Left colon (tissue), 2 donors: ENCODE measurements at regions of chr10 and their contacts with region 1.

Region 1: GRCh38 chr10:21989453-21990154 is 13.9 kb downstream of the DNAJC1 start:
- DNase-seq: peak; percentile 18 to 44
- ATAC-seq: peak; percentile 90

Region 2: DNA sequence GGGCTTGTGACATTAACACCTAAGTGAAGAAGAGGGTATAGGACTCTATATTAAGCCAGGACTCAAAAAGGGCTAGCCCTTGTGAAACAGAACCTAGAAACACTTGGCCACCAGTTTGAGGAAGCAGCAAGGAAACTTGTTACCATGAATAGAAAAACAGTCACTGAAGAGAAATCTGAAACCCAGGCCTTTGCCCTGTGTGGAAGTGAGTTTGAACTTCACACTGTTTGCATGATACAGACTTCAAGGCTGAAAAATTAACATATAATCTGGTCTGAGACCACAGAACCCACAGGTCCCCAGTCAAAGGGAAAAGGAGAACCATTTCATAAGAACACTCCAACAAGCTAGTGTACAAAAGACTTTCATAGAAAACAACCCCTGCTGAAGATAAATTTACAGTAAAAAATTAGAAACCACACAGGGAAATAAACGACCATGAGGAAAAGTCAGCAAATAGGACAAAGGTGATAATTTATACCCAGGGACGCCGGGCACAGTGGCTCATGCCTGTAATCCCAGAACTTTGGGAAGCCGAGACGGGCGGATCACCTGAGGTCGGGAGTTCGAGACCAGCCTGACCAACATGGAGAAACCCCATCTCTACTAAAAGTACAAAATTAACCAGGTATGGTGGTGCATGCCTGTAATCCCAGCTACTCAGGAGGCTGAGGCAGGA is 540.2 kb before region 1 on chr10:
- intact Hi-C with region 1: no loop called
- DNase-seq: no peak
- ATAC-seq: no peak

Region 3: GRCh38 chr10:22427890-22428571 is 438.4 kb after region 1 on chr10:
- intact Hi-C with region 1: loop called in 1 of 2 experiments (anchors 10 kb)
- DNase-seq: no peak
- ATAC-seq: no peak